Sciatic nerve (tissue), 2 donors: ENCODE measurements at regions of chr9 and their contacts with region 1.

Region 1: DNA sequence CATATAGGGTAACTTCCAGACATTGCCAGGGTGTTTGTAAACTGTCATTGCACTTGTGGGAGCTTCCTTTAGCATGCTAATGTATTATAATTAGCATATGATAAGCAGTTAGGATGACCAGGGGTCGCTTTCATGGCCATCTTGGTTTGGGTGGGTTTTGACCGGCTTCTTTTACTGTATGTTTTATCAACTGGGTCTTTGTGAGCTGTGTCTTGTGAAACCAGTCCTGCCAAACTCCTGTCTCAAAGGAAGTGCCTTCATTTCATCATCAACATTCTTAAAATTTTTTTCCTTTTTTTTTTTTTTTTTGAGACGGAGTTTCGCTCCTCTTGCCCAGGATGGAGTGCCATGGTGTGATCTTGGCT is 11.9 kb upstream of the MELK start:
- DNase-seq: no peak
- ATAC-seq: no peak

Region 2: DNA sequence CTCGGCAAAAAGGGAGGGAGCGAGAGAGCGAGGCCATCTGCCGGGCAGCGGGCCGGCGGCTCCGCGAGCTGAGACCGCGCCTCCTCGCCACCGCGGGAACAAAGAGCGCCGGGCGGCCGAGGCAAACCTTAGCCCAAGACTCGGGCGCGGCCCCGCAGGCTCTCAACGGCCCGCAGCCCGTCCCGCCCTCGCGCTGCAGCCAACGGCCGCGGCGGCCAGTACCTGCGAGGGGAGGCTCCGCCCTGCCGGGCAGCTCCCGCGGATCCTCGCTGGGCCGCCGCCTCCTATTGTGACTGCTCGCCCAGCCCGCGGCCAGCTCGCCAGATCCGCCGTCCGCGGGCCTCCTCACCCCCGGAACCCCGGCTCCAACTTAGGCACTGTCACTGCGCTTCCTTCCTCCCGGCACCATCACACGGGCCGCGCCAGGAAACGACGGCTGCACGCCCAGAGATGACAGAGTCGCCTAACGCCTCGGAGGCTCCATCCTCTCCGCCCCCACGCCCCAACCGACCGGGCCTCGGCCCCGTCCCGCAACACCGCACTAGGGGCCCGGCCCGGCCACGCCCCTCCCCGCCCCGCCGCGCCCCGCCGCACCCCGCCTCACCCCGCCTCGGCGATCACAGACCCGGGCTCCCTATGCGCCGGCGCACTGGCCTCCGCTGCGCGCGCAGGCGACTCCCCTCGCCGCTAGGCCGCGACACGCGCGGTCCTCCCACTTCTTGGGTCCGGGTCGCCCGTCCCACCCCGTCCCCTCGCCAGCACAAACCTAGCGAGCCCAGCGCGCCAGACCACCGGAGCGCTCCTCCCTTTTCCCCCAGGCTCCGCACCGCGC is 160.3 kb before region 1 on chr9:
- intact Hi-C with region 1: loop called (anchors 5 kb)
- DNase-seq: peak; percentile 92
- ATAC-seq: peak; percentile 95

Region 3: DNA sequence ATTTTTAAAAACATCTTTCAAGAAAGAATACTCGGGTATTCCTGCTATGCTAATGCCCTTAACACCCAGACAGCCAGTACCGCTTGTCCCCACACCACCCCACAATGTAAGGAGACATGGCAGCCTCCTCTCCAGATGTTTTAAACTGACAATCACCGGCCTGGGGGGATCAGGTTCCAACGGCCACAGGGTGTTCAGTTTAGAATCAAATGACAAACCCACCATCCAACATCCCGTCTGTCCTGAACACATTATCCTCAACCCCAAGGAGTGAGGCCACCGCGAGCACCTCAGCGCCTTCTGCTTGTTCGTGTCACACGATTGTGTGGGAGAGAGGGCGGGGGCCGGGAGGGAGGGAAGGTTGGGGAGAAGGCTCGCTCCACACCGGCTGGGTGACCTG is 320.5 kb after region 1 on chr9:
- intact Hi-C with region 1: no loop called
- DNase-seq: no peak
- ATAC-seq: no peak

Region 4: GRCh38 chr9:36891341-36891959 is 330.6 kb after region 1 on chr9:
- intact Hi-C with region 1: no loop called
- DNase-seq: peak; percentile 23
- ATAC-seq: no peak